Psoas muscle (tissue), 8 donors: ENCODE measurements at regions of chr2 and their contacts with region 1.

Region 1: DNA sequence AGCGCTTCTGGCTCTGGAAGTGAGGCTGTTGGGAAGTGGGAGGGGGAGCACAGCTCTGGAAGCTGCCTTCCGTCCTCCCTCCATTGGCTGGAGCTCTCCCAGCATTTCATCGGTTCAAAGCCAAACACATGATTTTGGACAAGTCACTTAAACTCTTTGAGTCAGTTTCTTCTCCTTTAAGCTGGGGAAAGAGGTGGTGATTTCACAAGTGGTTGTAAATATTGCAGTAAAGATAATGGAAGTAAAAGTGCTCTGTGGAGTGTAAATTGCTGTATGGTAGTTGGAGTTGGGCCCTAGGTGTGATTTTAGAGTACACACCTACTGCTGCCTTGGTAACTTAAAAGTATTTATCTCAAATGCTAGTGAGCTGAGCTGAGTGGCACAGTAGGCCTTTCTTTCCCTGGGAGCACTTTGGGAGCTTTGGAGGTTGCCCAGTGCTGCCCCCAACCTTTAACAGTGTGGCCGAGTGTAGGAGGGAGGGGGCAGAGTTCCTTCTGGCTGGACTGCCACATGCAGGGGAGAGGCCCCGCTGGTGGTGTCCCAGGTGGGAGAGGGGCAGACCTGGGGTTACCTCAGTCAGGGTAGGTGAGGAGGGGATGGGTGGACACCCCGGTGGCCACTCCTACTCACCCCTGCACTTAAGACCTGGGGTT is 54.7 kb downstream of the ASAP2 start:
- DNase-seq: peak in 1 of 2 donors; percentile 42
- ATAC-seq: peak in 1 of 4 donors; percentile 28
- H3K4me3 ChIP-seq: no peak overlapping the region
- H3K27ac ChIP-seq: peak overlapping the region; percentile 42
- H3K4me1 ChIP-seq: peaks cover 24% of the 10 kb centered on the region
- H3K27me3 ChIP-seq: no peaks in the 10 kb centered on the region
- CTCF ChIP-seq: no peak

Region 2: GRCh38 chr2:8906208-8906607 is 355.1 kb before region 1 on chr2:
- intact Hi-C with region 1: no loop called
- DNase-seq: no peak
- ATAC-seq: no peak
- H3K4me3 ChIP-seq: no peak overlapping the region
- H3K27ac ChIP-seq: no peak overlapping the region
- H3K4me1 ChIP-seq: no peaks in the 10 kb centered on the region
- H3K27me3 ChIP-seq: no peaks in the 10 kb centered on the region
- CTCF ChIP-seq: no peak

Region 3: GRCh38 chr2:9222239-9222892 is 39.0 kb before region 1 on chr2:
- intact Hi-C with region 1: loop called in 1 of 2 experiments (anchors 5 kb)
- DNase-seq: no peak
- ATAC-seq: no peak
- H3K4me3 ChIP-seq: no peak overlapping the region
- H3K27ac ChIP-seq: no peak overlapping the region
- H3K4me1 ChIP-seq: no peaks in the 10 kb centered on the region
- H3K27me3 ChIP-seq: no peaks in the 10 kb centered on the region
- CTCF ChIP-seq: no peak

Region 4: GRCh38 chr2:9234680-9235387 is 26.5 kb before region 1 on chr2:
- intact Hi-C with region 1: no loop called
- DNase-seq: no peak
- ATAC-seq: peak in 3 of 4 donors; percentile 36 to 50 (median 48)
- H3K4me3 ChIP-seq: no peak overlapping the region
- H3K27ac ChIP-seq: peak overlapping the region; percentile 69
- H3K4me1 ChIP-seq: peaks cover 22% of the 10 kb centered on the region
- H3K27me3 ChIP-seq: peaks cover 0 to 2% (median 0%) of the 10 kb centered on the region in 3 donors
- CTCF ChIP-seq: no peak